MCF 10A (cell line): ENCODE measurements at regions of chr2 and their contacts with region 1.

Region 1: GRCh38 chr2:118221666-118222594 is 133.7 kb downstream of the INSIG2 start:
- DNase-seq: peak; percentile 72
- H3K4me3 Mint-ChIP-seq: no peak overlapping the region
- H3K27ac Mint-ChIP-seq: no peak overlapping the region
- H3K4me1 Mint-ChIP-seq: peaks cover 12% of the 10 kb centered on the region
- H3K27me3 Mint-ChIP-seq: peaks cover 3% of the 10 kb centered on the region
- CTCF ChIP-seq: peak; percentile 73

Region 2: GRCh38 chr2:118186110-118186857 is 35.6 kb before region 1 on chr2:
- CTCF ChIA-PET with region 1: no interaction called
- POLR2A ChIA-PET with region 1: no interaction called
- intact Hi-C with region 1: no loop called
- DNase-seq: peak; percentile 74
- H3K4me3 Mint-ChIP-seq: peak overlapping the region; percentile 91
- H3K27ac Mint-ChIP-seq: peak overlapping the region; percentile 95
- H3K4me1 Mint-ChIP-seq: peaks cover 9% of the 10 kb centered on the region
- H3K27me3 Mint-ChIP-seq: peaks cover 5% of the 10 kb centered on the region
- CTCF ChIP-seq: no peak

Region 3: GRCh38 chr2:118269408-118270051 is 47.6 kb after region 1 on chr2:
- CTCF ChIA-PET with region 1: interaction called, 12 read pairs
- POLR2A ChIA-PET with region 1: no interaction called
- intact Hi-C with region 1: loop called (anchors 2 kb)
- DNase-seq: peak; percentile 55
- H3K4me3 Mint-ChIP-seq: no peak overlapping the region
- H3K27ac Mint-ChIP-seq: no peak overlapping the region
- H3K4me1 Mint-ChIP-seq: peaks cover 17% of the 10 kb centered on the region
- H3K27me3 Mint-ChIP-seq: no peaks in the 10 kb centered on the region
- CTCF ChIP-seq: peak; percentile 23

Region 4: GRCh38 chr2:118417406-118418120 is 195.6 kb after region 1 on chr2:
- CTCF ChIA-PET with region 1: no interaction called
- POLR2A ChIA-PET with region 1: no interaction called
- intact Hi-C with region 1: no loop called
- DNase-seq: peak; percentile 6
- H3K4me3 Mint-ChIP-seq: no peak overlapping the region
- H3K27ac Mint-ChIP-seq: no peak overlapping the region
- H3K4me1 Mint-ChIP-seq: no peaks in the 10 kb centered on the region
- H3K27me3 Mint-ChIP-seq: no peaks in the 10 kb centered on the region
- CTCF ChIP-seq: no peak

Region 5: GRCh38 chr2:118865106-118865505 is 643.2 kb after region 1 on chr2:
- CTCF ChIA-PET with region 1: interaction called, 72 read pairs
- POLR2A ChIA-PET with region 1: no interaction called
- intact Hi-C with region 1: loop called (anchors 1 kb)
- DNase-seq: peak; percentile 65
- H3K4me3 Mint-ChIP-seq: no peak overlapping the region
- H3K27ac Mint-ChIP-seq: no peak overlapping the region
- H3K4me1 Mint-ChIP-seq: peaks cover 14% of the 10 kb centered on the region
- H3K27me3 Mint-ChIP-seq: no peaks in the 10 kb centered on the region
- CTCF ChIP-seq: peak; percentile 80